Right cardiac atrium (tissue), 5 donors: ENCODE measurements at regions of chr7 and their contacts with region 1.

Region 1: GRCh38 chr7:148153616-148154284 is 436.8 kb upstream of the C7orf33 start:
- DNase-seq: peak; percentile 64 to 93 (median 91)
- ATAC-seq: peak; percentile 98
- H3K4me3 ChIP-seq: no peak overlapping the region
- H3K27ac ChIP-seq: peak overlapping the region; percentile 25
- H3K4me1 ChIP-seq: no peaks in the 10 kb centered on the region
- H3K27me3 ChIP-seq: no peaks in the 10 kb centered on the region

Region 2: DNA sequence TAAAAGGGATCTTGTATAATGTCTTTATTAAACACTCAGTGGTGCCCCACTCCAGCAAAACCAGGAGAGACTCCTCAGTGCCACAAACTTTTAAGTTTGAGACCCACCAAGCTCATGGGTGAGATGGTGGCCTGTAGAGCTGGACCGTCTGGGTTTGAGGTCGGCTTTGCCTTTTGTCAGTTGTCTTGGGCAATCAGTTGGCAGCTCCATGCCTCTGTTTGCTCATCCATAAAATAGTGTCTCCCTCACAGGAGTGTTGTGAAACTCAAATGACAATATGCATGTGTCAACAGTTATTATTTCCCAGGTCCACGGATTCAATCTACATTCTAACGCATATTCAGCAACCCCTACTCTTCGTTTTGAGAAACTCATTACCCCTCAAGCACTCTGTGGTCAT is 69.0 kb after region 1 on chr7:
- intact Hi-C with region 1: loop called in 1 of 4 experiments (anchors 10 kb)
- DNase-seq: no peak
- ATAC-seq: no peak
- H3K4me3 ChIP-seq: no peak overlapping the region
- H3K27ac ChIP-seq: no peak overlapping the region
- H3K4me1 ChIP-seq: no peaks in the 10 kb centered on the region
- H3K27me3 ChIP-seq: no peaks in the 10 kb centered on the region

Region 3: DNA sequence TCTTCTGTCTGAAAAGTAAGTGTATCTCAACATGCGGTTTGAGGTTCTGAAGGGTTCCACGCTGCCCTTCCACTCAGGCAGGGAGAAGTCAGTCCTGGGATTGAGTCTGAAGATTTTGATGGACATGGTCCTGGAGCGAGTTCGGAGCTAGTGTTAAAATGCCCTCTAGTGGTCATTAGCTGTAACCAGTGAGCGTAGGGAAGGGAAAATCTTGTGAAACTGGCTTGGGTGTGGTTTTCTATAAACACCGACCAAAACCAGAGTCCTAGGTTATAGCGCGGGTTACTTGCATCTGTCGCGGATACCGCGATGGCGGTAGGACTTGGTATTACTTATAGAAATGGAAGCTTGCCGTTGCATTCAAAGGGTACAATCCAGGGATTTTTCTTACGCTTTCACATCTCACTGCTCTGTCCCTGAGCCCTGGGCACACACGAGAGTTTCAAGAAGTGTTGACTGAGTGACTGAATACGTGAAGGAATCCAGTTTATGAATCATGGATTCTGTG is 88.6 kb after region 1 on chr7:
- intact Hi-C with region 1: no loop called
- DNase-seq: no peak
- ATAC-seq: peak; percentile 88 to 89
- H3K4me3 ChIP-seq: no peak overlapping the region
- H3K27ac ChIP-seq: no peak overlapping the region
- H3K4me1 ChIP-seq: no peaks in the 10 kb centered on the region
- H3K27me3 ChIP-seq: no peaks in the 10 kb centered on the region